Mucosa of descending colon (tissue), 3 donors: ENCODE measurements at regions of chr10 and their contacts with region 1.

Region 1: GRCh38 chr10:27658788-27659187 is 86.8 kb downstream of the MKX start:
- DNase-seq: no peak
- ATAC-seq: no peak
- H3K4me3 ChIP-seq: no peak overlapping the region
- H3K4me1 ChIP-seq: no peaks in the 10 kb centered on the region
- CTCF ChIP-seq: no peak

Region 2: DNA sequence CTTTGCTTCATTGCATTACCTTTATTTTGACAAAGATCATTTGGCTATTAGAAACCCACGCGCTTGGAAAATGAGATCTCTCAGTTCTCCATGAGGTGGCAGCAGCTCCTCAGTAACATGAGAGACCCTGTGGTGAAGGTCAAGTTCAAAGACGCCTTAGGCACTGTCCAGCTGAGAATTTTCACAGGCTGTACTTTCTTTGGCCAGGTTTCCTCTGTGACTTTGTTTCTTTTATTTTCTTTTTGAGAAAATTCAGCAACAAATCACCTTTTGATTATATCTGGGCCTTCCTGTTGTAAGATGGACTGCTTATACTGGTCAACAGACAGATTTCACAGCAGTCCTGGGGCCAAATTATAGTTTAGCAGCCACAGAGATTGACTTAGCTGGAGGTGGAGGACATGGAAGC is 100.2 kb before region 1 on chr10:
- intact Hi-C with region 1: loop called (anchors 5 to 10 kb)
- DNase-seq: peak in 1 of 3 donors; percentile 67
- ATAC-seq: peak; percentile 83
- H3K4me3 ChIP-seq: no peak overlapping the region
- H3K4me1 ChIP-seq: no peaks in the 10 kb centered on the region
- CTCF ChIP-seq: peak; percentile 69

Region 3: GRCh38 chr10:27568196-27569175 is 90.3 kb before region 1 on chr10:
- intact Hi-C with region 1: loop called in 1 of 2 experiments (anchors 10 kb)
- DNase-seq: no peak
- ATAC-seq: peak; percentile 50
- H3K4me3 ChIP-seq: no peak overlapping the region
- H3K4me1 ChIP-seq: no peaks in the 10 kb centered on the region
- CTCF ChIP-seq: no peak

Region 4: GRCh38 chr10:27914888-27915287 is 256.1 kb after region 1 on chr10:
- intact Hi-C with region 1: no loop called
- DNase-seq: no peak
- ATAC-seq: no peak
- H3K4me3 ChIP-seq: no peak overlapping the region
- H3K4me1 ChIP-seq: no peaks in the 10 kb centered on the region
- CTCF ChIP-seq: no peak